ENCODE measurements at regions of chr3 and their contacts with region 1.

Region 1: GRCh38 chr3:167861649-167862048 is 126.1 kb downstream of the SERPINI1 start:
- DNase-seq: peak; percentile 31 to 55 (median 49)
- H3K4me3 ChIP-seq: peak overlapping the region in 1 of 3 experiments; percentile 52
- H3K4me3 Mint-ChIP-seq: peak overlapping the region in 1 of 2 donors; percentile 68
- H3K27ac ChIP-seq: no peak overlapping the region
- H3K27ac Mint-ChIP-seq: peak overlapping the region; percentile 10 to 83 (median 67)
- H3K4me1 ChIP-seq: peaks cover 62 to 68% of the 10 kb centered on the region in 2 donors
- H3K4me1 Mint-ChIP-seq: peaks cover 63% of the 10 kb centered on the region
- H3K27me3 ChIP-seq: no peaks in the 10 kb centered on the region
- H3K27me3 Mint-ChIP-seq: peaks cover 0 to 2% (median 2%) of the 10 kb centered on the region in 3 donors
- CTCF ChIP-seq: no peak

Region 2: DNA sequence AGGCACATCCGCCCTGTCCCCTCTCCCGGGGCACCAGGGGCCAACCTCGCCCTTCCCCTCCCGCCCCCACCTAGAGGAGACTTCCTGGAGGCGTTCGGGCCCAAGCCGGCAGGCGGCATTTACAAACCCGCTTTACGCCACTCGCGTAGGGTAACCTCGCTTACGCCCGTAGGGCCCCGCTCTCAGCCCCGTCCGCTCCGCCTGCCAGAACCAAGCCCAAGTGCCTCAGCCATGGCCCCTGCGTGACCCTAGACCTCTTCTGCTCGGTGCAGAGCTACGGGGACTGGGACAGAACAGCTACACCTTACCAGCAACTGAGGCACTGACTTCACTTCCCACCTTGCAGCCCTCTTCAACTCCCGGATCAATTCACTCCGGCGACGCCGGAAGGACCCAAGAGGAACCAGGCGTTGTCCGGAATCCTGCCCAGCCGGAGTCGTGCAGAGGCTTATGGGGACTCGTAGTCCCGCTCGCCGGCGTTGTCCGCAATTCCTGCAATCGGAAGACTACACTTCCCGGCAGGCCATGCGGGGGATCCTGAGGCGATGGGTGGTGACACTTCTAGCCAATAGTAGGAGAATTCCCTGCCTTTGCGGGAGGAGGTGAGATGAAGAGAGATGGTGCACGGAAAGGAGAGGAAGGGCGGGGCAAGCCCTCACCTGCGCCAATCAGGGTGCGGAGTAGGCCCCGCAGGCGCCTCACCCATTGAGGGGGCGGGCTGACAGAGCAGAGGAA is 127.0 kb before region 1 on chr3 and contains the start of gene PDCD10:
- intact Hi-C with region 1: loop called in 1 of 2 experiments (anchors 10 kb)
- DNase-seq: peak; percentile 94 to 97 (median 94)
- H3K4me3 ChIP-seq: peak within 1 kb of the TSS; percentile 58 to 93 (median 86)
- H3K4me3 Mint-ChIP-seq: no peak within 1 kb of the TSS
- H3K27ac ChIP-seq: peak within 1 kb of the TSS; percentile 92 to 93
- H3K27ac Mint-ChIP-seq: no peak within 1 kb of the TSS
- H3K4me1 ChIP-seq: peaks cover 16 to 26% of the 10 kb centered on the region in 2 donors
- H3K4me1 Mint-ChIP-seq: peaks cover 20% of the 10 kb centered on the region
- H3K27me3 ChIP-seq: no peaks in the 10 kb centered on the region
- H3K27me3 Mint-ChIP-seq: no peaks in the 10 kb centered on the region
- CTCF ChIP-seq: no peak
- polyA plus RNA-seq, gene PDCD10: 31.7 to 61.8 (median 61.5) TPM

Region 3: DNA sequence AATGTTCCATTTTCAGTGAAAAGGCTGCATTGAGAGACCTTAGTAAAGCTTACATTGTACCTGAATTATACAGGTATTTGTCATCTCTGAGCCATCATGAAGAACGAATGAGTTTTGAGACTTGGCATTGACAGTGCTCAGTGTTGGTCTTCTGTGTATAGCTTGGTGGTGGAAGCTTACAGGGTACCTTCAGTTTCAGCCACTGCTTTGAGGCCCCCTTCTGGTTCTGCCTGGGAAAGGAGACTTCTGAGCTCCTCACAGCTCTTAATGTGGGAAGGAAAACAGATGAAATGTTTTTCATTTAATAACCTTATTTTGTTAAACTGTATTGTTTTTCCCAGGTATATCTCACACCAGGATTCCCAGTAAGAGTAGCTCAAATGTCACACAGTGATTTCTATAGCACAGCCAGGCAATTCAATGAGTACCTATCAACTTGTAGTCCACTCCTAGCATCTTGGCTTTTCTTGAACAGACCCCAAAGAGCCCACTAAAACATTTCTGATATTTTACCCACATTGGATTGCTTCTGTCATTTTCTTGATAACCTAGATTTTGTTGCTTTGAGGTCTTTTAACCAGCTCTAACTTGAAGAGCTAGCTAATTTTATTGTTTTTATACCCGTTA is 120.6 kb before region 1 on chr3:
- intact Hi-C with region 1: loop called (anchors 10 kb)
- DNase-seq: no peak
- H3K4me3 ChIP-seq: no peak overlapping the region
- H3K4me3 Mint-ChIP-seq: no peak overlapping the region
- H3K27ac ChIP-seq: no peak overlapping the region
- H3K27ac Mint-ChIP-seq: no peak overlapping the region
- H3K4me1 ChIP-seq: peaks cover 3% of the 10 kb centered on the region in 2 donors
- H3K4me1 Mint-ChIP-seq: peaks cover 4% of the 10 kb centered on the region
- H3K27me3 ChIP-seq: no peaks in the 10 kb centered on the region
- H3K27me3 Mint-ChIP-seq: peaks cover 0 to 1% (median 1%) of the 10 kb centered on the region in 3 donors
- CTCF ChIP-seq: no peak

Measured in CD14-positive monocyte (primary cell).